ENCODE measurements at regions of chr22 and their contacts with region 1.

Region 1: DNA sequence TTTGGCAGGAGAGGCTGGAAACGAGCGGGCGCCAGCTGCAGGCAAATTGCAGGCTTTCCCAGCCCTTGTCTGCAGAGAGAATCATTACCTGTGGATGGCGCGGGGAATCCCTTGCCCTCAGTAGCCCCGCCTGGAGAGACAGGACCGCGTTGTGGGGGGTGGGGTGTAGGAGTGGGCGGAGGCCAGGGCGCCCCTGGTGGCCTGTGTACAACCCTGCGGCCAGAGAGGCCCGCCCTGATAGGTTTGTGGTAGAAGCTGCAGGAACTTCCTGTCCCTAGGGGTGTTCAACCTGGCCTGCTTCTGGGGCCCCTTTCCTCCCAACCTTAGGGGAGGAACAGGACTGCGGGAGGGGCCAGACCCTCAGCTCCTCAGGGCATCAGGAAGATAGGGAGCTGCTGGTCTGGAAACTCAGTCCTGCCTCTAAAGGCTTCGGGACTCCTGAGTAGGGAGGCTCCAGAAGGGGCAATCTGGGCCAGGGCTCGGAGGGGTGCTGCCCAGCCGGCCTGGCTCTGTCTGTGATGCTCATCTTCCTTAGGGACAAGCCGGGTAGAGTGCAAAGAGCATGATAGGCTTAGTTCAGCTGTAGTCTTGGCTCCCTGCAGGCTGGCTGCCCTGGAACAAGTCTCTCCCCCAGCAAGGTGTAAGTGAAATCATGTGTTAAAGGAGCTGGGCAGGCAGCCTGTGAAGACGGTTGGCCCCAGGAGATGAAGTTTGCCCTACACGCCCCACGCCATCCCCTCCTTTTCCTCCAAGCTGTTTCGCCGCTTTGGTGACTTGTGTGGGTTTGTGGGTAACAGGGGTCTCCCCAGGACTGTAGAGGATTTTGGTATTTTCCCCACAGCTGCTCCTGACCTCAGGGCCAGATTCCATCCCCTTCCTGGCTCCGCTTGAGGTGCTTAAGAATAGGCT is 24.1 kb upstream of the SUSD2 start:
- DNase-seq: peak; percentile 82 to 91 (median 87)
- ATAC-seq: peak; percentile 79 to 88 (median 82)
- H3K4me3 ChIP-seq: peak overlapping the region; percentile 54 to 93 (median 76)
- H3K27ac ChIP-seq: peak overlapping the region in 11 of 12 donors; percentile 76 to 94 (median 86)
- H3K4me1 ChIP-seq: peaks cover 3 to 76% (median 55%) of the 10 kb centered on the region in 12 donors
- H3K27me3 ChIP-seq: no peaks in the 10 kb centered on the region
- CTCF ChIP-seq: peak; percentile 71 to 89 (median 81)
- POLR2A ChIP-seq: no peak

Region 2: DNA sequence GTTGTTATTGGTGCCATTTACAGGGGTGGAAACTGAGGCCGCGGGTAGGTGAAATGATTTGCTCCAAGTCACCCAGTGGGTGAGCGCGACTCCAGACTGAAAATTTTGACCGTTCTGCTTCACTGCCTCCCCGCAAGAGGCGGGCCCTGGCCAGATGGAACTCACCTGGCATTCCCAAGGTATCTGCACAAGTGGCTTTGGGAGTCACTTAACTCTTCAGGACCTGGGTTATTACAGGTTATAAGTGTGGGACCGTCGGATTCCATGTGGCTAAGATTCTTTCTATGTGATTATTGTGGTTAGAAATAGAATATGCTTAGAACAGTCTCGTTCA is 145.5 kb before region 1 on chr22:
- intact Hi-C with region 1: loop called in 4 of 10 experiments (anchors 10 kb)
- DNase-seq: no peak
- ATAC-seq: peak in 1 of 4 donors; percentile 1
- H3K4me3 ChIP-seq: peak overlapping the region; percentile 57 to 98 (median 94)
- H3K27ac ChIP-seq: peak overlapping the region; percentile 33 to 92 (median 84)
- H3K4me1 ChIP-seq: peaks cover 0 to 18% (median 12%) of the 10 kb centered on the region in 12 donors
- H3K27me3 ChIP-seq: no peaks in the 10 kb centered on the region
- CTCF ChIP-seq: no peak
- POLR2A ChIP-seq: no peak

Region 3: DNA sequence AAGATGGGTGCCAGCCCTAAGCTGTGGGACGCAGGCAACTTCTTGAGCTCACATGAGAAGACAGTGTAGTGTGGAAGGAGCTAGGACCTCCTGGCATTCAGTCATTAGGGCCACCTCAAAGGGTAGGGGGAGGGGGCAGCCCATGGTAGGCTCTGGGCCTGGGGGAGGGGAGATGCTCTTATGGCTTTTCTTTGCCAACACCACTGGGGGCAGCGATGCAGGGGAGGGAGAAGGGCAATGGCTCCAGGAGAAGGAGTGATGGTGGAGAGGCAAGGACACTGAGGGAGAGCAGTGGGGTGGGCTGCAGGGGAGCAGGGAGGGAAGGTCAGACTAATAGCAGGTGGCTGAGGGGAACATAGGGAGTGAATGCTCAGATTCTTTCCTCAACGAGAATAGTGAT is 39.2 kb before region 1 on chr22:
- intact Hi-C with region 1: loop called in 1 of 10 experiments (anchors 5 kb)
- DNase-seq: peak in 1 of 5 donors; percentile 39
- ATAC-seq: no peak
- H3K4me3 ChIP-seq: no peak overlapping the region
- H3K27ac ChIP-seq: no peak overlapping the region
- H3K4me1 ChIP-seq: peaks cover 0 to 33% (median 18%) of the 10 kb centered on the region in 12 donors
- H3K27me3 ChIP-seq: no peaks in the 10 kb centered on the region
- CTCF ChIP-seq: no peak
- POLR2A ChIP-seq: no peak

Measured in heart left ventricle (tissue), 16 donors.